Activated CD8-positive, alpha-beta T cell treated with anti-CD3 and anti-CD28 coated beads for 36 hours (primary cell): ENCODE measurements at regions of chr20 and their contacts with region 1.

Region 1: DNA sequence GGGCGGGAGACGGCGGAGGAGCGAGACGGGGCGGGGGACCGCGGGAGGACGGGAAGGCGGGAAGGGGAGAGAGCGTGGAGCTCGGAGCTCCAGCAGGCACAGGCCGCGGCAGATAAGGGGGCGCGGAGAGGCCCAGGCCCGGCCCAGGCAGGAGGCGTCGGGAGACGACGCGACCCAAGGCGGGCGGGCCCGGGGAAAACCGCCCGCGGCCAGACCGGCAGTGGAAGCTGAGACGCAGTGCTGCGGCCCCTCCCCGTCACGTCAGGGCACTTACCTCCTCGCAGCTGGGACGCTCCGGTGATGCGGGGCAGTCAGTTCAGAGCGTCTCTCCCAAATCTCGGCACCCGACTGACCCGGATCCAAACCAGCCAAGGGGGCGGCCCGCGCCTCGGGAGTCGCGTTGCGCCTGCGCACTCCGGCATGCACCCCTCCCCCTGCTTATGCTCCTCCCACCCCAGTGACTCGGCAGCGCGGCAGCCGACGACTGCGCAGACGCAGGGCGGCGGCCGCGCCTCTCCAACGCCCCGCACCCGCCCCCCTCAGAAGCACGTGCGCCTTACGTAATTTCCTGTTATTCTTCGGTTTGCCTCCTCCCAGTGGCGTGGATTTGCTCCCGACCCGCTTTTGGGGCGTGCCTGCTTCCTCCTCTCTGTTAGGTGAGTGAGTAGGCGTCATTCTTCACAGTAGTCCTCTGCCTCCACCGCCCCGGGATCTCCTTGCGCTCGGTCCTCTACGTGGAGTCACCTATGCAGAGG is at the start of gene OSER1:
- DNase-seq: peak; percentile 98
- ATAC-seq: peak; percentile 88
- H3K4me3 Mint-ChIP-seq: peak within 1 kb of the TSS; percentile 92
- H3K27ac Mint-ChIP-seq: peak within 1 kb of the TSS; percentile 92
- H3K4me1 Mint-ChIP-seq: peaks cover 46% of the 10 kb centered on the region
- H3K27me3 Mint-ChIP-seq: no peaks in the 10 kb centered on the region
- CTCF ChIP-seq: no peak
- total RNA-seq, gene OSER1: 20.9 to 23.3 TPM

Region 2: GRCh38 chr20:44253528-44253927 is 42.9 kb after region 1 on chr20:
- CTCF ChIA-PET with region 1: no interaction called
- POLR2A ChIA-PET with region 1: no interaction called
- intact Hi-C with region 1: no loop called
- DNase-seq: no peak
- ATAC-seq: no peak
- H3K4me3 Mint-ChIP-seq: no peak overlapping the region
- H3K27ac Mint-ChIP-seq: no peak overlapping the region
- H3K4me1 Mint-ChIP-seq: no peaks in the 10 kb centered on the region
- H3K27me3 Mint-ChIP-seq: peaks cover 3% of the 10 kb centered on the region
- CTCF ChIP-seq: no peak

Region 3: DNA sequence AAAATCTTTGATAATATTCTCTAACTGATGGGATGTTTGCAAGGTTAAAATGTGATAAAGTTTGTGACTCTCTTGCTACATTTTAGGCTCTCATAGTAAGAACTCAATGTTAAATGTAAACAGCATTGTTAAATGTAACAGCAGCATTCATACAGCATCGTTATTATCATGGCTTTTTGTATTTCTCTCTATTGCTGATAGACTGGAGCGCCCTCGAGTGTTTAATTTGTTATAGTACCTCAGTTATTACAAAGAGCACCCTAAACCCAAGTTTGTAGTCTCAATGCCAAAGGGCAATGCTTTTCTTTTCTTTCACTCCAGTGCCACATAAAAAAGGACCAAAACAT is 250.2 kb after region 1 on chr20:
- CTCF ChIA-PET with region 1: interaction called, 4 read pairs
- POLR2A ChIA-PET with region 1: no interaction called
- intact Hi-C with region 1: loop called (anchors 10 kb)
- DNase-seq: no peak
- ATAC-seq: no peak
- H3K4me3 Mint-ChIP-seq: no peak overlapping the region
- H3K27ac Mint-ChIP-seq: no peak overlapping the region
- H3K4me1 Mint-ChIP-seq: no peaks in the 10 kb centered on the region
- H3K27me3 Mint-ChIP-seq: no peaks in the 10 kb centered on the region
- CTCF ChIP-seq: peak; percentile 47